Dendritic cell treated with granulocyte-macrophage colony-stimulating factor and Interleukin-4, amounts not matched to agents 40 ng/mL and 50 ng/mL, for 4 days (primary cell): ENCODE measurements at regions of chrX and their contacts with region 1.

Region 1: DNA sequence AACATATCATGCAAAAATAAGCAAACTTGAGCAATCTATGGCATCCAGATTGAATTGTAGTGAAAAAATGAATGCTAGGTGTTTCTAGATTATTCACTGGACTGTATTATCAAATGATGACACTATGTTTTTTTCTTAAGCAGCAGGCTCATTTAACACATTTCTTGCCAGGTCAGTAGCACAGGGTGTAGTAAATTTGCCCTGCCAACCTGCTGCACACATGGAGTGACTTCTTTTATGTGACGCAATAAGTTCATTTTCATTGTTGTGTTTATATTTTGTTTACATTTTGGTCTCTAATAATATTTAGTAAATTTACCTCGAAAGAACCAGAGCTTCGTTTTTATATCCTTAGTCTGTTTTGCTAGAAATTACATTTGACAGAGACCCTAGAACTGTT is 9.5 kb downstream of the VBP1 start:
- H3K4me3 Mint-ChIP-seq: no peak overlapping the region
- H3K27ac Mint-ChIP-seq: no peak overlapping the region
- H3K4me1 Mint-ChIP-seq: peaks cover 6% of the 10 kb centered on the region
- H3K27me3 Mint-ChIP-seq: no peaks in the 10 kb centered on the region

Region 2: GRCh38 chrX:155108427-155108826 is 117.3 kb before region 1 on chrX:
- intact Hi-C with region 1: loop called (anchors 10 kb)
- H3K4me3 Mint-ChIP-seq: no peak overlapping the region
- H3K27ac Mint-ChIP-seq: no peak overlapping the region
- H3K4me1 Mint-ChIP-seq: no peaks in the 10 kb centered on the region
- H3K27me3 Mint-ChIP-seq: no peaks in the 10 kb centered on the region

Region 3: GRCh38 chrX:155441097-155441496 is 215.3 kb after region 1 on chrX:
- intact Hi-C with region 1: no loop called
- H3K4me3 Mint-ChIP-seq: no peak overlapping the region
- H3K27ac Mint-ChIP-seq: no peak overlapping the region
- H3K4me1 Mint-ChIP-seq: peaks cover 5% of the 10 kb centered on the region
- H3K27me3 Mint-ChIP-seq: no peaks in the 10 kb centered on the region